ENCODE measurements at regions of chr2 and their contacts with region 1.

Region 1: GRCh38 chr2:231557571-231558237 is 27.5 kb upstream of the NMUR1 start:
- DNase-seq: peak; percentile 61 to 75
- H3K4me3 ChIP-seq: no peak overlapping the region
- H3K27ac ChIP-seq: peak overlapping the region in 1 of 2 donors; percentile 44
- H3K4me1 ChIP-seq: no peaks in the 10 kb centered on the region
- H3K27me3 ChIP-seq: no peaks in the 10 kb centered on the region
- CTCF ChIP-seq: peak; percentile 46 to 56 (median 49)
- POLR2A ChIP-seq: no peak

Region 2: GRCh38 chr2:231227309-231228162 is 330.2 kb before region 1 on chr2:
- intact Hi-C with region 1: no loop called
- DNase-seq: peak; percentile 49 to 72
- H3K4me3 ChIP-seq: no peak overlapping the region
- H3K27ac ChIP-seq: peak overlapping the region; percentile 37 to 61
- H3K4me1 ChIP-seq: no peaks in the 10 kb centered on the region
- H3K27me3 ChIP-seq: no peaks in the 10 kb centered on the region
- CTCF ChIP-seq: peak; percentile 69 to 91 (median 82)
- POLR2A ChIP-seq: no peak

Region 3: DNA sequence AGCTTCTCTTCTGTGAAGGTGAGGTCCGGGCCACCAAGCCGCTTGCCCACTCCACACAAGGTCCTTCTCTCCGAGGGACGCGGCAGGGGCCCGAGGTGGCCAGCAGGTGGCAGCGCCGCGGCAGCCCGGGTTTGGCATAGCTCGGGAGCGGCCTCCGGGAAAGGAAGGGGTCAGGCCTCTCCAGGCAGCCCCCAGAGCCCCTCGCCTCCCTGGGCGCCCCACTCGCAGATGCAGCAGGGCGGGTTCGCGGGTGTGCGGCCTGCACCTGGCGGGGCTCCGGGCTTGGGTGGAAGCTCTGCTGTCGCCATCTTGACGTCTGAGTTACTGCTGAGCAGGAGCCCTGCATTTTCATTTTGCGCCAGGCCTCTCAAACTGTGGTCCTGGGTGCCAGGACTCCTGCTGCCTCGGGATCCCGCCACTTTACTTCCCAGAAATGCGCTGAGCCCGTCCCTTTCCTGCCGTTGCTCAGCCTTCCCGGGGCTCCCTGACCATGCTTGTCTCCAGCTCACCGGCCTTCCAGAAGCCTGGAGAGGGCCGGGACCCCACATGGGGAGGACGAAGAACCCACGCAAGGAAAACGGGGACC is 74.8 kb before region 1 on chr2:
- intact Hi-C with region 1: loop called (anchors 10 kb)
- DNase-seq: peak; percentile 59 to 77
- H3K4me3 ChIP-seq: peak overlapping the region; percentile 38 to 39
- H3K27ac ChIP-seq: peak overlapping the region; percentile 63 to 73
- H3K4me1 ChIP-seq: no peaks in the 10 kb centered on the region
- H3K27me3 ChIP-seq: no peaks in the 10 kb centered on the region
- CTCF ChIP-seq: peak; percentile 79 to 90 (median 82)
- POLR2A ChIP-seq: no peak

Region 4: DNA sequence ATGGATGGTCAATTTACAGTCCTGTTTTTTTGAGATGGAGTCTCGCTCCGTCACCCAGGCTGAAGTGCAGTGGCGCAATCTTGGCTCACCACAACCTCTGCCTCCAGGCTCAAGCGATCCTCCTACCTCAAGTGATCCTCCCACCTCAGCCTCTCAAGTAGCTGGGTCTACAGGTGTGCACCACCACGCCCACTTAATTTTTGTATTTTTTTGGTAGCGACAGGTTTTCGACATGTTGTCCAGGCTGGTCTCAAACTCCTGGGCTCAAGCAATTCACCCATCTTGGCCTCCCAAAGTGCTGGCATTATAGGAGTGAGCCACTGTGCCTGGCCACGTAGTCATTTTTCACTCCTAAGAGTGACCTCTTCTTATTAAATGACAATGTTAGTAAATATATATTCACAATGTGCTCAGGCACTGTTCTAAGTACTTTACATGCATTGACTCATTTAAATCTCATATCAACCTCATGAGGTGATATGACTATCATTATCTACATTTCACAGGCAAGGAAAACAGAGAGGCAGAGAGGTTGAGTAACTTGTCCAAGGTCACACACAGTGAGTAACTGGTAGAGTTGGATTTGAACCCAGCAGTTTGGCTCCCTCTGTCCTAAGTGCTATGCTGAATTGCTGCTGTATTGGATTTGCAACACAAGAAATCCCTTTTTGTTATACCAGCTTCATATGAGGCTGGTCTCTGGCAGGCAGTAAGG is 398.2 kb after region 1 on chr2:
- intact Hi-C with region 1: no loop called
- DNase-seq: no peak
- H3K4me3 ChIP-seq: no peak overlapping the region
- H3K27ac ChIP-seq: no peak overlapping the region
- H3K4me1 ChIP-seq: no peaks in the 10 kb centered on the region
- H3K27me3 ChIP-seq: no peaks in the 10 kb centered on the region
- CTCF ChIP-seq: no peak
- POLR2A ChIP-seq: no peak